AG04450 (cell line): ENCODE measurements at regions of chr7 and their contacts with region 1.

Region 1: GRCh38 chr7:22952286-22953015 is 61.5 kb downstream of the HYCC1 start:
- DNase-seq: no peak
- H3K4me3 ChIP-seq: no peak overlapping the region
- H3K27ac ChIP-seq: no peak overlapping the region
- H3K27me3 ChIP-seq: no peaks in the 10 kb centered on the region
- CTCF ChIP-seq: no peak

Region 2: GRCh38 chr7:22624795-22625194 is 327.7 kb before region 1 on chr7:
- CTCF ChIA-PET with region 1: interaction called, 10 read pairs
- POLR2A ChIA-PET with region 1: no interaction called
- DNase-seq: no peak
- H3K4me3 ChIP-seq: no peak overlapping the region
- H3K27ac ChIP-seq: no peak overlapping the region
- H3K27me3 ChIP-seq: no peaks in the 10 kb centered on the region
- CTCF ChIP-seq: no peak